B cell (primary cell): ENCODE measurements at regions of chr5 and their contacts with region 1.

Region 1: DNA sequence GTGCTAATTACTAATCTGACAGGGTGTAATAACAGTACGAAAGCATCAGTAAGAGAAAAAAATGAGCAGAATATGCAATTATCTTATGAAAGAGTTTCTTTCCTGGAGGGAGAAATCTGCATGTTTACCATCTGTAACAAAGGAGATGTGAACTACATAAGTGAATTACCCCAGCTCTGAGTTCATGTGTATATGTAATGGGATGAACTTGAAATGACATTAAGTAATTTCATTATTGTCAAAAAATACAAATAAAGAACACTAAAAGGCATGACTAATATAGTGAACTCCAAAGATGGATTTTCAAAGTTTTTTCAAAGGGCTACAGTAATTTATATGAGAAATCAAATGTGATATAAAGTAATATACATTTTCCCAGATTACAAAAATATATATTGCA is 944.0 kb downstream of the MAT2B start:
- DNase-seq: no peak
- ATAC-seq: no peak
- H3K4me3 ChIP-seq: no peak overlapping the region
- H3K4me3 Mint-ChIP-seq: no peak overlapping the region
- H3K27ac ChIP-seq: no peak overlapping the region
- H3K27ac Mint-ChIP-seq: no peak overlapping the region
- H3K4me1 ChIP-seq: no peaks in the 10 kb centered on the region
- H3K4me1 Mint-ChIP-seq: no peaks in the 10 kb centered on the region
- H3K27me3 ChIP-seq: no peaks in the 10 kb centered on the region
- H3K27me3 Mint-ChIP-seq: no peaks in the 10 kb centered on the region
- CTCF ChIP-seq: no peak

Region 2: DNA sequence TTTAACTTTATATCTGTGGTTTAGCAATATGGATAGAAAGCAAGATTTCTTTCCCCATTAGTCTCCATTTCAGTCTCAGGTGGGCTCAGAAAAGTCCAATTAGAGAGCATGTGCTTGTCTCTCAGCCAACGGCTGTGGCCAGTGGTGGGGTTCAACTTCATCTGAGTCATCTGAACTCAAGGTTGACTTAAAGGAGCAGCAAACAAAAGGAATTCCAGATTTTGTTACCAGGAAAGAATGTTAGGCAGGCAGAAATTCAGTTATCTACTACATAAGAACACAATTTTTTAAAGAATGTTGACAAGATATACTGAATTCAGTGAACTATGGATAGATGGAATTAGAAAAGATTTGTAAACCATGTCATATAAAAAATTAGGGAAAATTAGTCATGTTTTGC is 159.9 kb before region 1 on chr5:
- CTCF ChIA-PET with region 1: no interaction called
- POLR2A ChIA-PET with region 1: no interaction called
- intact Hi-C with region 1: no loop called
- DNase-seq: no peak
- ATAC-seq: no peak
- H3K4me3 ChIP-seq: no peak overlapping the region
- H3K4me3 Mint-ChIP-seq: no peak overlapping the region
- H3K27ac ChIP-seq: no peak overlapping the region
- H3K27ac Mint-ChIP-seq: no peak overlapping the region
- H3K4me1 ChIP-seq: no peaks in the 10 kb centered on the region
- H3K4me1 Mint-ChIP-seq: no peaks in the 10 kb centered on the region
- H3K27me3 ChIP-seq: no peaks in the 10 kb centered on the region
- H3K27me3 Mint-ChIP-seq: no peaks in the 10 kb centered on the region
- CTCF ChIP-seq: no peak

Region 3: DNA sequence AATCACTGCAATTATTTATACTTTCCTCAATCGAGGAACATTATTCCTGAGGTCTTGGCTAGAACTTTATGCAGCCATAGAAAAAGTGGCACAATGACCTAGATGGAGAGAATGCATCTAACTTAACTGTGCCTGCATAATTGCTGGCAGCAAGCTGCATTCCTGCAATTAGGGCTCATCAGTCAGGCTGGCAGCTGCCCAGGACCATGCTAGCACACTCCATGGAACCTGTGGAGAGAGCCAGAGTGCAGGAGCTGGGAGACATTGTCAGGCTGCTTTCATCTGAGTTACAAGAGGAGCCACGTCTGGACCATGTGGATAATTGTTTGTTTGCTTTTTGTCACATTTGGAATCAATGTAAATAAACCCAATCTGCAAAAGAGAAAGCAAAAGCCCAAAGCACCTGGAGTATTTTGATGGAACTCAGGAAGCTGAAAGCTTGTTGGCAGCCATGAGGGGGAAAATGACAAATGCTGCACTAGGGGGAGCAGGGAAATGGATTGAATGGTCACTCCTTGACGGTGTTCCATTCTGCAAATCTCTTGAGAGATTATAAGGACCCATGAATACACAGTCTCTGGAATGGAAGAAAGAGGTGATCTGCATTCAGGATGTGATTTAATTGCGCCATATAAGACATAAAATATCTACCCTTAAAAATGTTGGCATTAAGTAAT is 104.1 kb before region 1 on chr5:
- CTCF ChIA-PET with region 1: no interaction called
- POLR2A ChIA-PET with region 1: no interaction called
- intact Hi-C with region 1: no loop called
- DNase-seq: no peak
- ATAC-seq: no peak
- H3K4me3 ChIP-seq: no peak overlapping the region
- H3K4me3 Mint-ChIP-seq: no peak overlapping the region
- H3K27ac ChIP-seq: no peak overlapping the region
- H3K27ac Mint-ChIP-seq: no peak overlapping the region
- H3K4me1 ChIP-seq: no peaks in the 10 kb centered on the region
- H3K4me1 Mint-ChIP-seq: no peaks in the 10 kb centered on the region
- H3K27me3 ChIP-seq: no peaks in the 10 kb centered on the region
- H3K27me3 Mint-ChIP-seq: no peaks in the 10 kb centered on the region
- CTCF ChIP-seq: no peak

Region 4: GRCh38 chr5:164422400-164422799 is 27.1 kb before region 1 on chr5:
- CTCF ChIA-PET with region 1: no interaction called
- POLR2A ChIA-PET with region 1: no interaction called
- intact Hi-C with region 1: loop called (anchors 1 kb)
- DNase-seq: no peak
- ATAC-seq: no peak
- H3K4me3 ChIP-seq: no peak overlapping the region
- H3K4me3 Mint-ChIP-seq: no peak overlapping the region
- H3K27ac ChIP-seq: no peak overlapping the region
- H3K27ac Mint-ChIP-seq: no peak overlapping the region
- H3K4me1 ChIP-seq: no peaks in the 10 kb centered on the region
- H3K4me1 Mint-ChIP-seq: no peaks in the 10 kb centered on the region
- H3K27me3 ChIP-seq: no peaks in the 10 kb centered on the region
- H3K27me3 Mint-ChIP-seq: no peaks in the 10 kb centered on the region
- CTCF ChIP-seq: no peak